ENCODE measurements at regions of chr1 and their contacts with region 1.

Region 1: DNA sequence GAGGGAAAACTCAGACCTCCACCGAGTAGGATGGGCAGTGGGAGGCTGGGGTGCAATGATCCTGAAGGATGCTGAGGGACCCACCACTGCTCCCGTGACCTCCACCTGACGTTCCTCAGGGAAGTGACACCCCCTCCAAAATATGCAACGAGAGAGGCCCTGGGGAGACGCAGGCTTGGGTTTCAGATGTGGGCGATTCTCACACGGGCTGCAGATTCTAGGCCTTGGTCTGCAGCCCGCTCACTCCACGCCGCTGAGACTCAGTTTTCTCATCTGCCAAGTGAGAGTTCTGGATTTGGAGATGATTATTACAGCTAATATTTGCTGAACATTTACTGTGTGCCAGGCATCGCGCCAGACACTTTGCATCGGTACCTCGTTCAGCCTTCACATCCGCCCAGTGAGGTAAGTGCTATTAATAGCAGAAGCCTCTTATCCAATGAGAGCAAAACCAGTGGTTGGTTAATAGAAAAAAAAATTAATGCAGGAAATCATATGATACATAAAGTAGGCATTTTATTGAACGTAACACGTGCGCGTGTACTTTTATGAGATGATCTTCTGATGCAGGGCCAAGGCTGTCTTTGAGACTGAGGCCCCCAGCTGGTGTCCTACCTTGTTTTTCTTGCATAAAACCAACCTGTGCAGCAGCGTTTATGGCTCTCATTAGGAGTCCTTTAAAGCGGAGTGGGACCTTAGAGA is 102.0 kb upstream of the RUNX3 start:
- DNase-seq: peak in 8 of 9 experiments; percentile 36 to 94 (median 66)
- ATAC-seq: peak; percentile 60
- H3K4me3 ChIP-seq: no peak overlapping the region
- H3K4me3 Mint-ChIP-seq: peak overlapping the region; percentile 50
- H3K27ac ChIP-seq: peak overlapping the region; percentile 32 to 95
- H3K27ac Mint-ChIP-seq: peak overlapping the region; percentile 97
- H3K4me1 ChIP-seq: peaks cover 99% of the 10 kb centered on the region
- H3K4me1 Mint-ChIP-seq: peaks cover 77% of the 10 kb centered on the region
- H3K27me3 ChIP-seq: no peaks in the 10 kb centered on the region
- H3K27me3 Mint-ChIP-seq: no peaks in the 10 kb centered on the region
- CTCF ChIP-seq: peak; percentile 42

Region 2: GRCh38 chr1:24987875-24988557 is 44.1 kb before region 1 on chr1:
- CTCF ChIA-PET with region 1: interaction called, 115 read pairs
- POLR2A ChIA-PET with region 1: interaction called, 5 read pairs
- intact Hi-C with region 1: loop called (anchors 1 to 2 kb)
- DNase-seq: peak in 2 of 9 experiments; percentile 33 to 71
- ATAC-seq: peak; percentile 45
- H3K4me3 ChIP-seq: no peak overlapping the region
- H3K4me3 Mint-ChIP-seq: peak overlapping the region; percentile 53
- H3K27ac ChIP-seq: no peak overlapping the region
- H3K27ac Mint-ChIP-seq: peak overlapping the region; percentile 83
- H3K4me1 ChIP-seq: peaks cover 100% of the 10 kb centered on the region
- H3K4me1 Mint-ChIP-seq: peaks cover 97% of the 10 kb centered on the region
- H3K27me3 ChIP-seq: no peaks in the 10 kb centered on the region
- H3K27me3 Mint-ChIP-seq: no peaks in the 10 kb centered on the region
- CTCF ChIP-seq: no peak

Region 3: GRCh38 chr1:25484096-25484495 is 452.0 kb after region 1 on chr1:
- CTCF ChIA-PET with region 1: no interaction called
- POLR2A ChIA-PET with region 1: no interaction called
- intact Hi-C with region 1: no loop called
- DNase-seq: no peak
- ATAC-seq: no peak
- H3K4me3 ChIP-seq: no peak overlapping the region
- H3K4me3 Mint-ChIP-seq: no peak overlapping the region
- H3K27ac ChIP-seq: no peak overlapping the region
- H3K27ac Mint-ChIP-seq: no peak overlapping the region
- H3K4me1 ChIP-seq: no peaks in the 10 kb centered on the region
- H3K4me1 Mint-ChIP-seq: peaks cover 22% of the 10 kb centered on the region
- H3K27me3 ChIP-seq: no peaks in the 10 kb centered on the region
- H3K27me3 Mint-ChIP-seq: no peaks in the 10 kb centered on the region
- CTCF ChIP-seq: no peak